ENCODE measurements at regions of chr16 and their contacts with region 1.

Region 1: GRCh38 chr16:22077700-22078313 is 14.5 kb upstream of the VWA3A start:
- DNase-seq: peak; percentile 81
- H3K4me3 Mint-ChIP-seq: no peak overlapping the region
- H3K27ac Mint-ChIP-seq: no peak overlapping the region
- H3K4me1 Mint-ChIP-seq: no peaks in the 10 kb centered on the region
- H3K27me3 Mint-ChIP-seq: no peaks in the 10 kb centered on the region

Region 2: GRCh38 chr16:21989133-21989532 is 88.7 kb before region 1 on chr16:
- CTCF ChIA-PET with region 1: interaction called, 529 read pairs
- POLR2A ChIA-PET with region 1: no interaction called
- intact Hi-C with region 1: no loop called
- DNase-seq: no peak
- H3K4me3 Mint-ChIP-seq: no peak overlapping the region
- H3K27ac Mint-ChIP-seq: no peak overlapping the region
- H3K4me1 Mint-ChIP-seq: peaks cover 12% of the 10 kb centered on the region
- H3K27me3 Mint-ChIP-seq: no peaks in the 10 kb centered on the region

Region 3: GRCh38 chr16:22007509-22008214 is 70.1 kb before region 1 on chr16 and contains the start of gene MOSMO:
- CTCF ChIA-PET with region 1: interaction called, 529 read pairs
- POLR2A ChIA-PET with region 1: interaction called, 6 read pairs
- intact Hi-C with region 1: no loop called
- DNase-seq: peak; percentile 74
- H3K4me3 Mint-ChIP-seq: peak within 1 kb of the TSS; percentile 84
- H3K27ac Mint-ChIP-seq: peak within 1 kb of the TSS; percentile 46
- H3K4me1 Mint-ChIP-seq: peaks cover 41% of the 10 kb centered on the region
- H3K27me3 Mint-ChIP-seq: no peaks in the 10 kb centered on the region
- total RNA-seq, gene MOSMO: 8.1 to 9.6 TPM

Region 4: DNA sequence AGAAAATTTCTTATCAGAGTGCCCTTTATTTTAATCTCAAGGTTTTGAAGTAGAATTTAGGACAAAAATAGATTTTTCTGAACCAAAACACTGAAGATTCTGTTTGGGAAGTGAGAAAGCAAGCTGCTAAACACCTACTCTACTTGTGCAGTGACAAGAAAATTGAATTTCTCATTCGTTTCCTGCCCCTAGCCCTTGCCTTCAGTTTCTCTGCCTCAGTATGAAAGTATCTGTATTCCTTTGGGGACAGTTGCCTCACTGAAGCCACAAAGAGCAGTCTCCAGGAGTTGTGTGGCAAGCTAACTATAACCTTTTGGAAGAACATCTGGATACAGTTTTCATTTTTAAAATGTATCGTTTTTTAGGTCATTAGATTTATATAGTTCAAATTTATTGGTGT is 50.2 kb before region 1 on chr16:
- CTCF ChIA-PET with region 1: interaction called, 14 read pairs
- POLR2A ChIA-PET with region 1: no interaction called
- intact Hi-C with region 1: no loop called
- DNase-seq: no peak
- H3K4me3 Mint-ChIP-seq: no peak overlapping the region
- H3K27ac Mint-ChIP-seq: no peak overlapping the region
- H3K4me1 Mint-ChIP-seq: peaks cover 30% of the 10 kb centered on the region
- H3K27me3 Mint-ChIP-seq: no peaks in the 10 kb centered on the region

Region 5: GRCh38 chr16:22055878-22056277 is 21.9 kb before region 1 on chr16:
- CTCF ChIA-PET with region 1: interaction called, 36 read pairs
- POLR2A ChIA-PET with region 1: interaction called, 5 read pairs
- intact Hi-C with region 1: no loop called
- DNase-seq: no peak
- H3K4me3 Mint-ChIP-seq: no peak overlapping the region
- H3K27ac Mint-ChIP-seq: peak overlapping the region; percentile 71
- H3K4me1 Mint-ChIP-seq: peaks cover 52% of the 10 kb centered on the region
- H3K27me3 Mint-ChIP-seq: no peaks in the 10 kb centered on the region

Region 6: GRCh38 chr16:22091758-22092600 is 14.2 kb after region 1 on chr16 and contains the start of gene VWA3A:
- CTCF ChIA-PET with region 1: interaction called, 34 read pairs
- POLR2A ChIA-PET with region 1: no interaction called
- intact Hi-C with region 1: no loop called
- DNase-seq: no peak
- H3K4me3 Mint-ChIP-seq: no peak within 1 kb of the TSS
- H3K27ac Mint-ChIP-seq: no peak within 1 kb of the TSS
- H3K4me1 Mint-ChIP-seq: no peaks in the 10 kb centered on the region
- H3K27me3 Mint-ChIP-seq: peaks cover 5% of the 10 kb centered on the region
- total RNA-seq, gene VWA3A: 0.05 TPM in 1 of 2 experiments, not detected in the other

Region 7: GRCh38 chr16:22321339-22322001 is 243.7 kb after region 1 on chr16:
- CTCF ChIA-PET with region 1: no interaction called
- POLR2A ChIA-PET with region 1: no interaction called
- intact Hi-C with region 1: no loop called
- DNase-seq: peak; percentile 82
- H3K4me3 Mint-ChIP-seq: no peak overlapping the region
- H3K27ac Mint-ChIP-seq: peak overlapping the region; percentile 38
- H3K4me1 Mint-ChIP-seq: peaks cover 9% of the 10 kb centered on the region
- H3K27me3 Mint-ChIP-seq: no peaks in the 10 kb centered on the region

Region 8: GRCh38 chr16:22337849-22338635 is 260.2 kb after region 1 on chr16:
- CTCF ChIA-PET with region 1: no interaction called
- POLR2A ChIA-PET with region 1: no interaction called
- intact Hi-C with region 1: no loop called
- DNase-seq: no peak
- H3K4me3 Mint-ChIP-seq: no peak overlapping the region
- H3K27ac Mint-ChIP-seq: peak overlapping the region; percentile 5
- H3K4me1 Mint-ChIP-seq: peaks cover 10% of the 10 kb centered on the region
- H3K27me3 Mint-ChIP-seq: no peaks in the 10 kb centered on the region